ENCODE measurements at regions of chr3 and their contacts with region 1.

Region 1: GRCh38 chr3:108130701-108131474 is 40.1 kb upstream of the CD47 start:
- DNase-seq: no peak
- H3K4me3 Mint-ChIP-seq: peak overlapping the region; percentile 57
- H3K27ac Mint-ChIP-seq: peak overlapping the region; percentile 78
- H3K4me1 Mint-ChIP-seq: peaks cover 81% of the 10 kb centered on the region
- H3K27me3 Mint-ChIP-seq: no peaks in the 10 kb centered on the region

Region 2: GRCh38 chr3:108239082-108239481 is 108.2 kb after region 1 on chr3:
- intact Hi-C with region 1: no loop called
- DNase-seq: no peak
- H3K4me3 Mint-ChIP-seq: no peak overlapping the region
- H3K27ac Mint-ChIP-seq: no peak overlapping the region
- H3K4me1 Mint-ChIP-seq: no peaks in the 10 kb centered on the region
- H3K27me3 Mint-ChIP-seq: no peaks in the 10 kb centered on the region

Region 3: GRCh38 chr3:108342837-108343478 is 212.1 kb after region 1 on chr3:
- intact Hi-C with region 1: loop called (anchors 5 kb)
- DNase-seq: peak; percentile 58
- H3K4me3 Mint-ChIP-seq: peak overlapping the region; percentile 15
- H3K27ac Mint-ChIP-seq: peak overlapping the region; percentile 79
- H3K4me1 Mint-ChIP-seq: peaks cover 23% of the 10 kb centered on the region
- H3K27me3 Mint-ChIP-seq: peaks cover 7% of the 10 kb centered on the region

Region 4: GRCh38 chr3:108835101-108835500 is 704.2 kb after region 1 on chr3:
- intact Hi-C with region 1: loop called (anchors 5 kb)
- DNase-seq: peak; percentile 86
- H3K4me3 Mint-ChIP-seq: peak overlapping the region; percentile 90
- H3K27ac Mint-ChIP-seq: peak overlapping the region; percentile 98
- H3K4me1 Mint-ChIP-seq: peaks cover 70% of the 10 kb centered on the region
- H3K27me3 Mint-ChIP-seq: no peaks in the 10 kb centered on the region

Measured in activated CD4-positive, alpha-beta T cell treated with anti-CD3 and anti-CD28 coated beads, Interleukin-2, amount 10 ng/mL, durations not matched to agents 24 days and 14 days (primary cell).